Activated B cell treated with CpG ODN at 0.5 μM for 24 hours (primary cell): ENCODE measurements at regions of chr7 and their contacts with region 1.

Region 1: GRCh38 chr7:142811154-142811737 is 40.5 kb downstream of the PRSS2 start:
- DNase-seq: no peak
- ATAC-seq: no peak
- H3K4me3 Mint-ChIP-seq: peak overlapping the region; percentile 17
- H3K27ac Mint-ChIP-seq: peak overlapping the region; percentile 98
- H3K4me1 Mint-ChIP-seq: peaks cover 85% of the 10 kb centered on the region
- H3K27me3 Mint-ChIP-seq: no peaks in the 10 kb centered on the region
- CTCF ChIP-seq: no peak

Region 2: GRCh38 chr7:142557971-142558582 is 253.2 kb before region 1 on chr7:
- CTCF ChIA-PET with region 1: no interaction called
- POLR2A ChIA-PET with region 1: no interaction called
- intact Hi-C with region 1: no loop called
- DNase-seq: no peak
- ATAC-seq: peak; percentile 42
- H3K4me3 Mint-ChIP-seq: no peak overlapping the region
- H3K27ac Mint-ChIP-seq: no peak overlapping the region
- H3K4me1 Mint-ChIP-seq: no peaks in the 10 kb centered on the region
- H3K27me3 Mint-ChIP-seq: peaks cover 58% of the 10 kb centered on the region
- CTCF ChIP-seq: peak; percentile 48

Region 3: DNA sequence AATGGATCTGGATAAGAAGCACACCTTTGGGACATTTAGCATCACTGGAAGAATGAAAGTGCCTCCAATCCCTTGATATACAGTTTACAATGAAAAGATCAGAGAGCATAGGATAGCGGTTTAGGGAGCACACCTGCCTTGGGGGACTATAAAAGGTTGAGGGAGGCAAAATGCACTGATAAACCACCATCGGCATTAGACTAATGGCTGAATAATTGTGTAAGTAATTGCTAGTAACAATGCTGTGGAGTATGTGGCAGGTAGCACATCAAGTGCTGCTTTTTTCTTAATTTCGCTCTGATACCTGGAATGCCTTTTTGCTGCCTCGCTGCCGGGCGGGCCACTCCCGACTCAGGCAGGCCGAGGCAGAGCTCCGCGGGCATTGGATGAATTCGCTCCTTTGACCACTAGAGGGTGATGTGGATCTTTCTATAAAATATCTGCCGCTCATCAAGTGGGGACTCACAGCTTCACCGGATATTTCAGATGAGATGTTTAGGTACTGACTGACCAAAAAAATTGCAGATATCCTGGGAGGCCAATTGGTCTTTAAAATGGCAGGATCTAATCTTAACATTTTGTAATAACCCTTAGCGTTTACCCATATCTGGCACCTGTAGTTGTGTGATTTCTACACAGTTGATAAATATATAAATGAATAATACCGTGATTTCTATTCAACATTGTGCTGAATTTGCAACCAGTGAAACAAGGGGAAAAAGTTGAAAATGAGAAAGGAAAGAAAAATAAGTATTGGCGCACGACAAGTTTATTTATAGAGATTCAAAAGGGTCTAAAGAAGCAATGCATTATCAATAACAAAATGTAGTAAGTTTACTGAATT is 178.7 kb before region 1 on chr7:
- CTCF ChIA-PET with region 1: interaction called, 153 read pairs
- POLR2A ChIA-PET with region 1: interaction called, 9 read pairs
- intact Hi-C with region 1: loop called (anchors 1 kb)
- DNase-seq: peak; percentile 44
- ATAC-seq: peak; percentile 97
- H3K4me3 Mint-ChIP-seq: no peak overlapping the region
- H3K27ac Mint-ChIP-seq: no peak overlapping the region
- H3K4me1 Mint-ChIP-seq: peaks cover 2% of the 10 kb centered on the region
- H3K27me3 Mint-ChIP-seq: peaks cover 16% of the 10 kb centered on the region
- CTCF ChIP-seq: peak; percentile 89

Region 4: GRCh38 chr7:142711746-142712619 is 99.3 kb before region 1 on chr7:
- CTCF ChIA-PET with region 1: interaction called, 204 read pairs
- POLR2A ChIA-PET with region 1: interaction called, 45 read pairs
- intact Hi-C with region 1: loop called (anchors 1 kb)
- DNase-seq: no peak
- ATAC-seq: peak; percentile 25
- H3K4me3 Mint-ChIP-seq: peak overlapping the region; percentile 63
- H3K27ac Mint-ChIP-seq: no peak overlapping the region
- H3K4me1 Mint-ChIP-seq: peaks cover 27% of the 10 kb centered on the region
- H3K27me3 Mint-ChIP-seq: no peaks in the 10 kb centered on the region
- CTCF ChIP-seq: no peak

Region 5: GRCh38 chr7:142771353-142771723 is 39.9 kb before region 1 on chr7:
- CTCF ChIA-PET with region 1: interaction called, 3 read pairs
- POLR2A ChIA-PET with region 1: interaction called, 12 read pairs
- intact Hi-C with region 1: no loop called
- DNase-seq: no peak
- ATAC-seq: peak; percentile 85
- H3K4me3 Mint-ChIP-seq: peak overlapping the region; percentile 32
- H3K27ac Mint-ChIP-seq: no peak overlapping the region
- H3K4me1 Mint-ChIP-seq: peaks cover 23% of the 10 kb centered on the region
- H3K27me3 Mint-ChIP-seq: peaks cover 9% of the 10 kb centered on the region
- CTCF ChIP-seq: no peak

Region 6: DNA sequence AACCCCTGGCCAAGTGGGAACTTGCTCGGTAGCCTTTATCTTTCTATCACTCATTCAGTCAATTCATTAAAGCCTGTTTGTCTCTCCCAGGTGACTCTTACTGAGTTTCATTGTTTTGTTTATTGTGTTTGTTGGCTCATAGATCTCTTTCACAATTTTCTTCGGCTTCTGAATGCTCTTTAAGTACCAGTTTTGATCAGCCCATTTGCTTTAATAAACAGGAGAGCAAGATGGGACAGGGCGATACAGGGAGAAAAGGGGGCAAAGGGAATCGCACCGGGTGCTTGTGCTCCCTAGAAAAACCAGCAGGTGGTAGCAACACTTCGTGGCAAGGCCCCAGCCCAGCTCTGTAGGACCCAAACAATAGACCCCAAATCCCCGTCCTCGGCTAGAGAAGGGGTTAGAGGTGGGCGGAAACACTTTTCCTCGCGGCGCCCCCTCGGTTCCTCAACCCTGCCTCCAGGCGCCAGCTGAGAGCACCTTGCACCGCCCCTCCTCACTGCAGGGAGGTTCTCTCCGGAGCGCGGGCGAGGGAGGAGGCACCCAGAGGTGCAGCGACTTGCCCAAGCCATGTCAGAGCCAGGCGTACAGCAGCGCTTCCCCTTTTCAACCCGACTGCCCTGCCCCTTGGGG is 42.6 kb after region 1 on chr7:
- CTCF ChIA-PET with region 1: interaction called, 25 read pairs
- POLR2A ChIA-PET with region 1: interaction called, 59 read pairs
- intact Hi-C with region 1: loop called (anchors 1 kb)
- DNase-seq: peak; percentile 76
- ATAC-seq: peak; percentile 88
- H3K4me3 Mint-ChIP-seq: peak overlapping the region; percentile 97
- H3K27ac Mint-ChIP-seq: peak overlapping the region; percentile 95
- H3K4me1 Mint-ChIP-seq: peaks cover 27% of the 10 kb centered on the region
- H3K27me3 Mint-ChIP-seq: no peaks in the 10 kb centered on the region
- CTCF ChIP-seq: peak; percentile 61

Region 7: DNA sequence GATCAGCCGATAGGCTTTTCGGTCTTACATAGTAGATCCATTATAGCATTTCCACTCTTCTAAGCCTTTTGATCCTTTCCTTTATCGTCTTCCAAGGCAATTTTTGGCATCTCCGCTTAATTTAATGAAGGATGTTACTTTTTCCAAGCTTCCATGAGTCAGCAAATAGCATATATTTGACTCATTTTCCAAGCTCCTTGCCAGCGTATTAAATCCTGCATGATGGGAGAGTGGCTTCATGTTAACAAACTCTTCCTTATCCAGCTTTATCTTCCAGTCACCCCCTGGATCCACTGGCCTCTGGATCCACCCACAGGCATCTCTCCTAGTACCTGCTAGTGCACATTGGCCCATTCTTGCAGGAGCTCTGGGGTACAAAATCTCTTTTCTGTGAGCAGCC is 202.6 kb after region 1 on chr7:
- CTCF ChIA-PET with region 1: no interaction called
- POLR2A ChIA-PET with region 1: interaction called, 22 read pairs
- intact Hi-C with region 1: no loop called
- DNase-seq: no peak
- ATAC-seq: no peak
- H3K4me3 Mint-ChIP-seq: peak overlapping the region; percentile 21
- H3K27ac Mint-ChIP-seq: peak overlapping the region; percentile 95
- H3K4me1 Mint-ChIP-seq: peaks cover 83% of the 10 kb centered on the region
- H3K27me3 Mint-ChIP-seq: no peaks in the 10 kb centered on the region
- CTCF ChIP-seq: no peak

Region 8: GRCh38 chr7:143263266-143264195 is 452.3 kb after region 1 on chr7 and contains the start of gene GSTK1:
- CTCF ChIA-PET with region 1: no interaction called
- POLR2A ChIA-PET with region 1: interaction called, 3 read pairs
- intact Hi-C with region 1: loop called (anchors 5 kb)
- DNase-seq: peak; percentile 68
- ATAC-seq: peak; percentile 97
- H3K4me3 Mint-ChIP-seq: peak within 1 kb of the TSS; percentile 95
- H3K27ac Mint-ChIP-seq: peak within 1 kb of the TSS; percentile 83
- H3K4me1 Mint-ChIP-seq: peaks cover 52% of the 10 kb centered on the region
- H3K27me3 Mint-ChIP-seq: no peaks in the 10 kb centered on the region
- CTCF ChIP-seq: no peak
- total RNA-seq, gene GSTK1: 144 and 150 TPM in 2 replicates